Mammary epithelial cell (primary cell): ENCODE measurements at regions of chr11 and their contacts with region 1.

Region 1: DNA sequence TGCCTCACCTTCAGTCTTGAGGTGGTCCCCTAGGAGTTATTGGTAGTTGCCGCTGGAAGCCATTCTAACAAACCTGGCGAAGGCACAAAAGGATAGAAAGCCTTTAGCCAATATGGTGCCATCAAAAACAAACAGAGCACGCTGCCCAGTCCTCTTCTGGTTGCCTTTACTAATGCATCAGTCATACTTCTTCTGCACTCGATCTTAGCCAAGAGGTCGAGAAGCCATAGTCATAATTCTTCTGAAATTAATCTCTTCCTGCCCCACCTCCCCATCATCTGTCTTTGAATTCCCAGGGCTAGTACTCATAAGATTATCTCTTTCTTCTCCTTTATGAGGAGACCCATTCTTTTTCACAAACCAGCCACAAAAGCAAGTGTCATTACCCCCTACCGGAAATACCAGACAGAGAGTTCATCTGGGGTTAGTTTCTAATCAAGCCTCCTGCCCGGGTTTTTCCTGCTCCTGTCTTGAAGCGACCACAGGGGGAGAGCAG is 21.4 kb upstream of the EHF start:
- DNase-seq: peak; percentile 91
- H3K4me3 ChIP-seq: no peak overlapping the region
- H3K27ac ChIP-seq: peak overlapping the region; percentile 68
- H3K4me1 ChIP-seq: peaks cover 20% of the 10 kb centered on the region
- H3K27me3 ChIP-seq: no peaks in the 10 kb centered on the region
- CTCF ChIP-seq: no peak

Region 2: GRCh38 chr11:34519595-34520235 is 79.7 kb before region 1 on chr11:
- CTCF ChIA-PET with region 1: no interaction called
- dilution Hi-C with region 1: loop called (anchors 5 kb)
- in situ Hi-C with region 1: no loop called
- intact Hi-C with region 1: no loop called
- DNase-seq: no peak
- H3K4me3 ChIP-seq: no peak overlapping the region
- H3K27ac ChIP-seq: no peak overlapping the region
- H3K4me1 ChIP-seq: no peaks in the 10 kb centered on the region
- H3K27me3 ChIP-seq: no peaks in the 10 kb centered on the region
- CTCF ChIP-seq: no peak

Region 3: DNA sequence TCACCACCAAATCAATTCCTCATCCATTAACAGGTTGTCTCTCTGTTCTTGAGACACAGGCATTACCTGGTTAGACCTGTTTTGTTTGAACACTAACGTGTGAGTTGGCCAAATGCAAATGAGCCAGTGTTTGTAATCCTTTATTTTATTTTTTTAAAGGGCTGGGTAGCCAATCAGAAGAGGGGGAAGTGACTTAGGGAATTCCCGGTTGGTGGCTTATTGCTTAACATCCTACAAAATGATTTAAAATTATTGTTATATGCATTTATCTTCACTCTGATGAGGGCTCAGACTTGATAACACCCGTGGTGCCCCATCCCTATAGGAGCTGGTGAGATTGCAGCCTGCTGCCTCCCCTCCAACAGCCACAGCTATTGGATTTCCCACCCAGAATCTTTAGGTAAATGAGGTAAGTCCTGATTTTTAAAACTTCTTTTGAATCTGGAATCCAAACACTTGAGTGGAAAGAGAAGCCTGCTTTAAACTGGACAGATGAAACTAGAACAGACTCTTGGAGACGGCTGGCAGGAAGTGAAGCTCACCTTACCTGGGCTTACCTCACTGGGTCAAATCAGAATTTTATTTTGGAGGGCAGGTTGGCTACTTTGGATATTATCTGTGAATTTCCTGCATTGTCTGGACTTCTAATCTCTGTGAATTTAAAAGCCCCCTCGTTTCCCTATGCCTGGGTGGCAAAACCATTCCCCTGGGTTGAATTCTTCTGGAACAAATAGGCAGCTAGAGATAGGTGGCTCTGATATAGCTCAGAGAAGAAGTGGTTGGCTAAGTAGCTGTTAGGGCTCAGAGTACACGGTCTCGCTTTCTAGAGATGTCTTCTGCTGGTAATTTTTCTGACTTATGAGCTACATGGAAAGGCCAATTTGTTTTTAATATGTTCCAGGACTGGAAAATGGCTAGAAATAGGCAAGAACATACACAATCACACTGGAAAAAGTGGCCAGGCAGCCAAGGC is 21.7 kb after region 1 on chr11 and contains the start of gene EHF:
- CTCF ChIA-PET with region 1: no interaction called
- dilution Hi-C with region 1: no loop called
- in situ Hi-C with region 1: no loop called
- intact Hi-C with region 1: loop called (anchors 2 kb)
- DNase-seq: peak; percentile 90
- H3K4me3 ChIP-seq: peak within 1 kb of the TSS; percentile 43 to 46 (median 44)
- H3K27ac ChIP-seq: peak within 1 kb of the TSS; percentile 81
- H3K4me1 ChIP-seq: peaks cover 28% of the 10 kb centered on the region
- H3K27me3 ChIP-seq: no peaks in the 10 kb centered on the region
- CTCF ChIP-seq: no peak
- total RNA-seq, gene EHF: 9.7 to 41.9 TPM

Region 4: DNA sequence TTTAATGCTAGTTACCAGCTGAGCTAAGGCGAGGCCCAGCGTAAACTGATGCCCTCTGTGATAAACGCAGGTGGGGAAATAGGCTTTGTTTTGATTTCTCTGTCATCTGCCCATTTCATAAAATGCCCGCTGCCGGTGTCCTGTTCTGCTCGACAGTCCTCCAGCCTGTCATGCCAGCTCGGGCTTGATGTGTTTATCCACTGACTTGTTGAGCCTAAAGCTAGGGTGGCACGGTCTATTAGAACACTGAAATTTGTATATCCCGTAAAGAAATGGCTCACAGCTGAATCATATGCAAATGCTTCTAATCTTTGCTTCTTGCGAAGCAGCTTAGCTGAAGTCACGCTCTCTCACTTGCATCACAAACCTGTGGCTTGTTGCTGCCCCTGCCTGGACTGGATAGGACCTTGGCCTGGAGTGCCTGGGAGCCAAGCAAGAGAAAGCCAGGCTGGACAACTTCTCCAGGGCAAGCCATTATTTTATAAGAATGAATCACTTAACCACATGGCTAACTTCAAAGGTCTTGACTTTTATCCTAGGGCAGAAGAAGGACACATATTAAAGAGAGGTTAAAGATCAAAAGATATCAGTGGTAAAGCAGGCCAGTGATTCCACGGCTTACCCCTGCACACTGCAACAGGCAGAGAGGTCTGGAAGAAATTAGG is 54.5 kb after region 1 on chr11:
- CTCF ChIA-PET with region 1: no interaction called
- dilution Hi-C with region 1: no loop called
- in situ Hi-C with region 1: no loop called
- intact Hi-C with region 1: loop called (anchors 1 kb)
- DNase-seq: peak; percentile 98
- H3K4me3 ChIP-seq: no peak overlapping the region
- H3K27ac ChIP-seq: peak overlapping the region; percentile 78
- H3K4me1 ChIP-seq: peaks cover 42% of the 10 kb centered on the region
- H3K27me3 ChIP-seq: no peaks in the 10 kb centered on the region
- CTCF ChIP-seq: peak in 1 of 2 donors; percentile 50

Region 5: GRCh38 chr11:34680918-34681554 is 81.6 kb after region 1 on chr11:
- CTCF ChIA-PET with region 1: no interaction called
- dilution Hi-C with region 1: no loop called
- in situ Hi-C with region 1: no loop called
- intact Hi-C with region 1: loop called (anchors 2 kb)
- DNase-seq: peak; percentile 90
- H3K4me3 ChIP-seq: no peak overlapping the region
- H3K27ac ChIP-seq: peak overlapping the region; percentile 60
- H3K4me1 ChIP-seq: peaks cover 36% of the 10 kb centered on the region
- H3K27me3 ChIP-seq: no peaks in the 10 kb centered on the region
- CTCF ChIP-seq: no peak

Region 6: DNA sequence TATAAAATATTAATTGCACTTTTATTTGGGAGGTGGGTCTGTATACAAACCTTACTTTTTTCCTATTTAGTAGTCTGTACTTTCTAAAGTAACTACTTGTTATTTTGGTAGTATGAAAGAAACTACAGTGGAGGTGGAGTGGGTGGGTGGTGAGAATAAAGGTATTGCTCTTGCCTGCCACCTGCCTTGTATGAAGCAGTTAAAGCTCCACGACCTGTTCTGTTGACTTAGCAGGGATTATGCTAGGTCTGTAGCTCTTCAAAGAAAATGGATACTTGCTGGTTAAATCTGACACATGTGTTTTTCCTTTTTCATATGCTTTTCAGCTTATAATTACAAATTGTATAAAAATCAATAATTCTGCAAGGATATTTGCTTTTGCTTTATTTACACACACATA is 133.4 kb after region 1 on chr11:
- CTCF ChIA-PET with region 1: no interaction called
- dilution Hi-C with region 1: no loop called
- in situ Hi-C with region 1: no loop called
- intact Hi-C with region 1: loop called (anchors 5 kb)
- DNase-seq: no peak
- H3K4me3 ChIP-seq: no peak overlapping the region
- H3K27ac ChIP-seq: no peak overlapping the region
- H3K4me1 ChIP-seq: no peaks in the 10 kb centered on the region
- H3K27me3 ChIP-seq: peaks cover 2% of the 10 kb centered on the region
- CTCF ChIP-seq: no peak